Heart right ventricle (tissue), 16 donors: ENCODE measurements at regions of chr2 and their contacts with region 1.

Region 1: DNA sequence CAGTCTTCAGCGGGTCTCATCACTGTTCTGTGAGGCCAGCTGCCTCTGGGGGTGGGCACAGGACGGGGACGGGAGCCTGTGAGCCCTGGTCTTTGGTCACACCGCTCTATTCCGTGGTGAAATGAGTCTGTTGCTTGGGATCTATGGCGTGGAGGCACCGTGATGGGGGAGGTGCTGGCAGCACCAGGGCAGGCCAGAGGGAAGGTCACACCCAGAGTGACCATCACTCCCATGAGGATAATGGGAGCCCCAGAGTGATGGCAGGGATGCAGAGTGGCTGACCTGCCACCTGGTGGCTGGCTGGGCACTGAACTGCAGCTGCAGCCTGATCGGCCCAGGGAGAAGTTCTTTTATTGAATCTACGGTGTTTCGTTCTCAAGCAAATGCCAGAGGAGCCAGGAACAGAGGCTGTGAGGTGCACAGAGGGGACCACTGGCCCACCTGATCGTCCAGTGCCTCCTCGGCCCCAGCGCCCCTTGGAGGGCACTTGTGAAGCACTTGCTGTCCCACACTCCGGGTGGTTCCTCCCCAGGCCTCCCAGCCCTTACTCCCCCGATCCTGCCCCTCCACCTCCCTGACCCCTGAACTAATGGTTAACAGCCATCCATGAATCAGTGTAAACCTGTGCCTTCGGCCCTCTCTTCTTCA is 17.9 kb downstream of the KCNIP3 start:
- DNase-seq: peak in 1 of 2 donors; percentile 32
- ATAC-seq: peak in 5 of 8 donors; percentile 17 to 74 (median 66)
- H3K4me3 ChIP-seq: no peak overlapping the region
- H3K27ac ChIP-seq: no peak overlapping the region
- H3K4me1 ChIP-seq: no peaks in the 10 kb centered on the region
- H3K27me3 ChIP-seq: peaks cover 0 to 32% (median 6%) of the 10 kb centered on the region in 7 donors
- CTCF ChIP-seq: peak; percentile 21 to 65 (median 56)

Region 2: DNA sequence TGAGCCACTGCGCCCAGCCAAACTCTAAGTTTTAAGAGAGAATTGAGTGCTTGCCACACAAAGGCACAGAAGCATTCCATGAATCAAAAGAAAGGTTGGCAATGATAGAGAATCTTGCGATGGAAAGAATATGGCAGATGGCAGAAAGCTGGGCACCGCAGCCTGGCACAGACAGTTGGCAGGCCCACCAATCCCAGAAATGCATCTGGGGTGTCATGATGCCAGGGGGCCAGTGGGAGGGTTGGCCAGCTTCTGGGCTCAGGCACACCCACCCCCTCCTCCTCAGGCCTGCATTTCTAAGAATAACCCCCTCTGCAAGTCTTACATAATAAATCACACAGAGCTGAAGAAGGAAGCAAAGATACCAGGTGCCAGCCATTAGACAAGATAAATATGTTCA is 129.9 kb before region 1 on chr2:
- intact Hi-C with region 1: loop called in 2 of 10 experiments (anchors 5 to 10 kb)
- DNase-seq: no peak
- ATAC-seq: no peak
- H3K4me3 ChIP-seq: no peak overlapping the region
- H3K27ac ChIP-seq: no peak overlapping the region
- H3K4me1 ChIP-seq: no peaks in the 10 kb centered on the region
- H3K27me3 ChIP-seq: no peaks in the 10 kb centered on the region
- CTCF ChIP-seq: no peak

Region 3: GRCh38 chr2:95231723-95232122 is 83.4 kb before region 1 on chr2:
- intact Hi-C with region 1: loop called in 9 of 10 experiments (anchors 1 to 10 kb)
- DNase-seq: peak in 1 of 2 donors; percentile 18
- ATAC-seq: peak in 1 of 8 donors; percentile 22
- H3K4me3 ChIP-seq: no peak overlapping the region
- H3K27ac ChIP-seq: no peak overlapping the region
- H3K4me1 ChIP-seq: no peaks in the 10 kb centered on the region
- H3K27me3 ChIP-seq: no peaks in the 10 kb centered on the region
- CTCF ChIP-seq: peak; percentile 26 to 65 (median 60)